ENCODE measurements at regions of chr12 and their contacts with region 1.

Region 1: GRCh38 chr12:113221181-113221997 is at the start of gene TPCN1:
- DNase-seq: peak; percentile 96 to 100 (median 99)

Region 2: DNA sequence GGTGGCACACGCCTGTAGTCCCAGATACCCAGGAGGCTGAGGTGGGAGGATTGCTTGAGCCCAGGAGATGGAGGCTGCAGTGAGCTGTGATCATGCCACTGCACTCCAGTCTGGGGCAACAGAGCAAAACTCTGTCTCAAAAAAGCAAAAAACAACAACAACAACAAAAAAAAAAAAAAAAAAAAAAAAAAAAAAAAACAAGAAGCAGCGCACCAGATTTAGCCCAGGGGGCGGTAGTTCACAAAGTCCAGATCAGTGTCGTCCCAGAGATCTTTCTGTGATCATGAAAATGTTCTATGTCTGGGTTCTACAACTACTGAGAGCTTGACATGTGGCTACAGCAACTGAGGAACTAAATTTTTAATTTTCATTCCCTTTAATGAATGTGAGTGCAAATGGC is 215.6 kb before region 1 on chr12:
- intact Hi-C with region 1: no loop called
- DNase-seq: no peak

Region 3: GRCh38 chr12:113257564-113257963 is 36.2 kb after region 1 on chr12:
- intact Hi-C with region 1: loop called (anchors 5 kb)
- DNase-seq: no peak